Ovary (tissue), 10 donors: ENCODE measurements at regions of chr4 and their contacts with region 1.

Region 1: DNA sequence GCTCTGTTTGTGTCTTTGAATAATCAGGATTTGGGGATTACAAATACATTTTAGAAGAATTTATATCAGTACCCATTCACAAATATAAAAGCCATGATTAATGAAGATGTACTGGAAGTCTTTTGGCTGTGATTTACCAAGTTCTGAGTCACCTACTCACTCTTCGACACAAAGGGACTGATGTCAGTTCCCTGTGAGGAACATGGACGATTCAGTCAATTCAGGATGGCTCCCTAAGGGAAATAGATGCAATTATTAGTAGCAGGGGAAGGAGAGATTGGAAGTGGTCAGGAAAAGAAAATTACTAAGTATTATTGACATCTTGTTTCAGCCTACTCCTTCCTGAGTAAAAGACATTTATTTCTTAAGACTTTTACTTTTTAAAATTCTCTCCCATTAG is 550.7 kb upstream of the SLIT2 start:
- DNase-seq: no peak
- H3K4me3 ChIP-seq: no peak overlapping the region
- H3K27ac ChIP-seq: no peak overlapping the region
- H3K4me1 ChIP-seq: no peaks in the 10 kb centered on the region
- H3K27me3 ChIP-seq: no peaks in the 10 kb centered on the region
- CTCF ChIP-seq: no peak
- EP300 ChIP-seq: no peak
- POLR2A ChIP-seq: no peak

Region 2: GRCh38 chr4:19659101-19659500 is 41.9 kb before region 1 on chr4:
- intact Hi-C with region 1: no loop called
- DNase-seq: no peak
- H3K4me3 ChIP-seq: no peak overlapping the region
- H3K27ac ChIP-seq: no peak overlapping the region
- H3K4me1 ChIP-seq: no peaks in the 10 kb centered on the region
- H3K27me3 ChIP-seq: no peaks in the 10 kb centered on the region
- CTCF ChIP-seq: no peak
- EP300 ChIP-seq: no peak
- POLR2A ChIP-seq: no peak

Region 3: DNA sequence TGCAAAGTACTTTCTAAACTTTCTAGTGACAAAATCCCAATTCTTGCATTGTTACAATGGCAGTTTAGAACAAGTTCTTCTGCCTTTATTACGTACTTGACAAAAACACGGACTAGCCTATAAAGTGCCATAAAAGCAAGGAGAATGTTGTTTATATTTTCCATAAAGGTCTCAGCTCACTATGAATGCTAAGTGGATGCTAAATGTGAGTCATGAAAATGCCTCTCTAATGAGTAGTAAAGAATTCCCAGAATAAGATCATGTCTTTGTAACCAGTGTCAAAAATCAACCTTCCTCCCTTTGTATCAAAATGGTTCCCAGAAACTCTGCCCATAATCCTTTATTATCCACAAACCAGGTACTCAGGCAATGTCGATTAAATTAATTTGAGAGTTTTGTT is 10.9 kb after region 1 on chr4:
- intact Hi-C with region 1: loop called in 1 of 4 experiments (anchors 1 kb)
- DNase-seq: no peak
- H3K4me3 ChIP-seq: no peak overlapping the region
- H3K27ac ChIP-seq: no peak overlapping the region
- H3K4me1 ChIP-seq: no peaks in the 10 kb centered on the region
- H3K27me3 ChIP-seq: no peaks in the 10 kb centered on the region
- CTCF ChIP-seq: no peak
- EP300 ChIP-seq: no peak
- POLR2A ChIP-seq: no peak